Naive thymus-derived CD4-positive, alpha-beta T cell (primary cell): ENCODE measurements at regions of chr3 and their contacts with region 1.

Region 1: DNA sequence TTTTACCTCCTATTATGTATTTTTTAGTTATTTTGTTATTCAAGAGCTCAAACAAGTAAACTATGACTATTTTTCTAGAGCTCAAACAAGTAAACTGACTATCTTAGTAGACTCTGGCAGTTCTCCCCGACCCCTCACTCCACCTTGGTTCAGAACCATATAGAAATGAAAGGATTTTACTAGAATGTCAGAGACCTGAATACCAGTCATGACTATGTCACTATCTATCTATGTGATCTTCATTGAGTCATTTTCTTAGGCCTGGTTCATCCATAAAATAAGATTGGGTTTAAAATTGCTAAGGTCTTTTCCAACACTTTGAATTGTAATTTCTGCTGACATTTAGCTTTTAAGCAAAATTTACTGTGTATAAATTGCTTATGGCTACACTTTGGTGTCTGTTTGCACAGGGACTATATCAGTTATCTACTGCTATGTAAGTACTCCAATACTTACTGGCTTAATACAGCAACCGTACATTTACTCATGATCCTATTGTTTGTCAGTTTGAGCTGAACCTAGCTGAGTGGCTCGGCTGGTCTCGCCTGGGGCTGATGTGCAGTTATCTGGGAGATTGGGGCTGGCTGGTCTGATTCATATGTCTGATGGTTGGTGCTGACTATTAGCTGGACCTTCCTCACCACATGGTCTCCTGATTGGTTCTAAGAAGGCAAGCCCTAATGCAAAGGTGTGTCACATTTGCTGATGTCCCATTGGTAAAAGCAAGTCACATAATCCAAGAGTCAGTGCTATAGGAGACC is 37.0 kb downstream of the RASA2 start:
- DNase-seq: no peak
- ATAC-seq: no peak
- H3K4me3 ChIP-seq: no peak overlapping the region
- H3K4me3 Mint-ChIP-seq: peak overlapping the region in 6 of 10 donors; percentile 3 to 74 (median 27)
- H3K27ac ChIP-seq: no peak overlapping the region
- H3K27ac Mint-ChIP-seq: peak overlapping the region in 8 of 9 donors; percentile 76 to 93 (median 87)
- H3K4me1 ChIP-seq: peaks cover 12 to 47% of the 10 kb centered on the region in 2 donors
- H3K4me1 Mint-ChIP-seq: peaks cover 38 to 97% (median 85%) of the 10 kb centered on the region in 7 donors
- H3K27me3 ChIP-seq: no peaks in the 10 kb centered on the region
- H3K27me3 Mint-ChIP-seq: no peaks in the 10 kb centered on the region

Region 2: DNA sequence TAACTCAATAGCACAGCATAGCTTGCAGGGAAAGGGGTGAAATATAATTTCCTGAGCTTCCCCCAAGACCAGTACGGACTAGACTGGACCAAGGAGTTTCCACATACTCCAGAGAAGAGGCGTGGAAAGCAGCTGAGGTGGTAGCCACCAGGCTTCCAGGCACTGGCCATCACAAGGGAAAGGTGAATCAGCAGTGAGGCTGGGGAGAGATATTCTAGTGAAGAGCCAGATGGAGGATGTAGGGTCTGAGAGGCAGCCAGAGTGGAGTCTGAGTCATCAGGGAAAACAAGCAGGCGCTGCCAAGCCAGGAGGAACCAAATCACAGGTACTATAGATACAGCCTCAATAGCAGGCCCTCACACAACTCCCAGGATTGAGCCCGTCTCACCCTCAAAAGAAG is 46.6 kb before region 1 on chr3:
- CTCF ChIA-PET with region 1: no interaction called
- POLR2A ChIA-PET with region 1: no interaction called
- intact Hi-C with region 1: loop called in 1 of 2 experiments (anchors 2 kb)
- DNase-seq: no peak
- ATAC-seq: no peak
- H3K4me3 ChIP-seq: no peak overlapping the region
- H3K4me3 Mint-ChIP-seq: no peak overlapping the region
- H3K27ac ChIP-seq: no peak overlapping the region
- H3K27ac Mint-ChIP-seq: no peak overlapping the region
- H3K4me1 ChIP-seq: peaks cover 11% of the 10 kb centered on the region in 2 donors
- H3K4me1 Mint-ChIP-seq: peaks cover 24 to 46% (median 32%) of the 10 kb centered on the region in 7 donors
- H3K27me3 ChIP-seq: no peaks in the 10 kb centered on the region
- H3K27me3 Mint-ChIP-seq: peaks cover 0 to 21% (median 0%) of the 10 kb centered on the region in 5 donors

Region 3: GRCh38 chr3:141493184-141493583 is 30.6 kb before region 1 on chr3:
- CTCF ChIA-PET with region 1: interaction called, 3 read pairs
- POLR2A ChIA-PET with region 1: interaction called, 5 read pairs
- intact Hi-C with region 1: loop called in 1 of 2 experiments (anchors 2 kb)
- DNase-seq: peak in 6 of 9 donors; percentile 17 to 54 (median 38)
- ATAC-seq: peak; percentile 89
- H3K4me3 ChIP-seq: no peak overlapping the region
- H3K4me3 Mint-ChIP-seq: peak overlapping the region in 8 of 10 donors; percentile 27 to 97 (median 51)
- H3K27ac ChIP-seq: peak overlapping the region; percentile 94
- H3K27ac Mint-ChIP-seq: peak overlapping the region in 8 of 9 donors; percentile 38 to 93 (median 70)
- H3K4me1 ChIP-seq: peaks cover 69 to 73% of the 10 kb centered on the region in 2 donors
- H3K4me1 Mint-ChIP-seq: peaks cover 53 to 99% (median 87%) of the 10 kb centered on the region in 7 donors
- H3K27me3 ChIP-seq: no peaks in the 10 kb centered on the region
- H3K27me3 Mint-ChIP-seq: no peaks in the 10 kb centered on the region

Region 4: GRCh38 chr3:141507392-141508066 is 16.3 kb before region 1 on chr3:
- CTCF ChIA-PET with region 1: interaction called, 3 read pairs
- POLR2A ChIA-PET with region 1: interaction called, 7 read pairs
- intact Hi-C with region 1: loop called in 1 of 2 experiments (anchors 1 kb)
- DNase-seq: no peak
- ATAC-seq: peak; percentile 54
- H3K4me3 ChIP-seq: no peak overlapping the region
- H3K4me3 Mint-ChIP-seq: peak overlapping the region; percentile 27 to 72 (median 52)
- H3K27ac ChIP-seq: peak overlapping the region; percentile 2
- H3K27ac Mint-ChIP-seq: peak overlapping the region in 8 of 9 donors; percentile 44 to 86 (median 72)
- H3K4me1 ChIP-seq: peaks cover 50 to 92% of the 10 kb centered on the region in 2 donors
- H3K4me1 Mint-ChIP-seq: peaks cover 37 to 57% (median 55%) of the 10 kb centered on the region in 7 donors
- H3K27me3 ChIP-seq: no peaks in the 10 kb centered on the region
- H3K27me3 Mint-ChIP-seq: no peaks in the 10 kb centered on the region

Region 5: DNA sequence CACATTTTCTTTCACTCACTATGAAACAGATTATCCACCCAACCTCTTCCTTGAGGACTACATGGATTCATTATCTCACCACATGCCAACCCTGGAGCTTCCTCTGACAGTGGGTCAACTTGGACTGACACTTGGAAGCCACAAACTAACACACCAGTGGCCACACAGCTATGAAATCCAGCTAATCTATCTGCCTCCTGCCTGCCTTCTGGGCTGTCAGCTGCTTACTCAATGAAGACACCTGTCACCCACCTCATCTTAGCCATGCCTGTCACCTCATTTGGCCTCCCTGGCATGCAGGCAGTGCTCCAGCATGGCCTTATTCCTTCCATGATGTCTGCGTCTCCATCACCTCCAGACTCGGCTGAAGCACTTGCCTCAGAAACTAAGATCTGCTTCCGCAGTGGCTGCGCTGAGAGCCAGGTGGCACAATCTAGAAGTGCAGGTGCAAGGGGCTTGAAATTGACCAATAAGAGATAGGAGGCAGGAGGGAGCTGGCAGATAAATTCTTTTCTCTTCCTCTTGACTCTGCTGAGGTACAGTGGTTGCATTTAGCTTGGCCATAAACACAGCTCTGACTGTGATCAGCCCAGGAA is 109.1 kb after region 1 on chr3:
- CTCF ChIA-PET with region 1: no interaction called
- POLR2A ChIA-PET with region 1: no interaction called
- intact Hi-C with region 1: no loop called
- DNase-seq: no peak
- ATAC-seq: no peak
- H3K4me3 ChIP-seq: no peak overlapping the region
- H3K4me3 Mint-ChIP-seq: no peak overlapping the region
- H3K27ac ChIP-seq: no peak overlapping the region
- H3K27ac Mint-ChIP-seq: no peak overlapping the region
- H3K4me1 ChIP-seq: no peaks in the 10 kb centered on the region
- H3K4me1 Mint-ChIP-seq: no peaks in the 10 kb centered on the region
- H3K27me3 ChIP-seq: no peaks in the 10 kb centered on the region
- H3K27me3 Mint-ChIP-seq: peaks cover 0 to 13% (median 0%) of the 10 kb centered on the region in 5 donors